ENCODE measurements at regions of chr22 and their contacts with region 1.

Region 1: DNA sequence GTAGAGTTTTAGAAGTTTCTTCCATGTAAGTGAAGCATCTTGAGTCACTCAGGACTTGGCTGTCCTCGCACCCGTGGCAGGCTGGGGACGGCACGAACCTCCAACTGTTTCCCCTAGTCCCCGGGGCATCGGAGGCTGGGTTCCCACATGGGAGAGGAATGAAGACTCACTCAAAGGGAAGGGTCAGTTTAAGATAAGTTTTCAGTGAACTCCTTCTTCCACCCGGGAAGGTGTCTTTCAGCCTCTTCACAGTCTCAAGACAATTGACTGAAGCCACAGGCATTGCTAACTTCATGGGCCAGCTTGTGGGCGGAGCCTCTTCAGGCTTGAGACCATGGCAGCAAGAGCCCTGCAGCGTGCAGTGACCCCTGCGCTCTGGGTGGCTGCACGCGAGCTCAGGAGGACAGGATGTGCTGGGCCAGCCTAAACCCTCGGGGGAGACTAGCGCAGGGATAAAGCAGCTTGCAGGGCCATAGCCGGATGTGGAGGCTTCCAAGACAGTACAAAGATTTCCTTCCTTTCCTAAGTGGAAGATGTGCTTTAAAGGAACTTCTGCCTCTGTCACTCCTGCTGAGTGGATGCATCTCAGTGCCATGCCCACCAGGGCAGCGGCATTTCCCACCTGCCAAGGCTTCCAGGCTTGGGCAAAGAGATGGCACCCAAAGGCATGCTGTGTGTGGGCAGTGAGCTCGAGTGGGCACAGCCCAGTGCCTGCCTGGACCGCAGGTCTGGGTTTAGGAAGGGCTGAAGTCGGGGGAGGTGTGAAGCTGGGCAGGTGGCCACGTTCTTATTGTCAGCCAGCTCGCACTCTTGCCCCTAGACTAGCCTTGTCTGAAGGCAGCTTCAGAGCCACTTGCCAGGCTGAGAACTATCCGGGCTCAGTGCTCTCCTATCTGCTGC is 32.9 kb downstream of the PPIL2 start:
- DNase-seq: no peak
- H3K4me3 ChIP-seq: no peak overlapping the region
- CTCF ChIP-seq: no peak

Region 2: GRCh38 chr22:21569459-21570170 is 129.1 kb before region 1 on chr22:
- CTCF ChIA-PET with region 1: no interaction called
- POLR2A ChIA-PET with region 1: no interaction called
- DNase-seq: no peak
- H3K4me3 ChIP-seq: peak overlapping the region; percentile 24
- CTCF ChIP-seq: no peak

Region 3: DNA sequence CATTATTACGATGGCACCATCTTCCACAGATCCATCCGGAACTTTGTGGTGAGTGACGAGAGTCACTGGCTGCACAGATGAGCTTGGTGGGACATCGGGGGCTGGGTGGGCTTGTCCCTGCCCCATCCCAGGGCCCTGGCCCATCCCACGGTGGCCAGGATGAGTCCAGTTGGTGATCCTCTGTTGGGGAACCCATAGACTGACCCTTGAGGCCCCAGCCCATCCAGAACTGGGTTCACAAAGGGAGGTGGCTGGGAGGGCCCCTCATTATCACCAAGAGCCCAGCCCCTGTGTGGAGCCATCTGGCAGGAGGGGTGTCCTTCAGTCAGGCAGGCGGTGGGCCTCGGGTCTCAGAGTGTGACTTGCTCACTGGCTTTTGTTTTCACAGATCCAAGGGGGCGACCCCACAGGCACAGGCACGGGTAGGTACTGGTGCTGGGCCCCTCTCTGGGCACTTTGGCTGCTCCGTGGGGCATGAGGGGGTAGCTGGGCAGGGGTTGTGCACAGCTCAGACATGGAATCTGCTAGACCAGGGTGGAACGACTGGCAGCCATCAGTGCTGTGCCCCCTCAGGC is 10.9 kb before region 1 on chr22:
- CTCF ChIA-PET with region 1: no interaction called
- POLR2A ChIA-PET with region 1: no interaction called
- DNase-seq: no peak
- H3K4me3 ChIP-seq: no peak overlapping the region
- CTCF ChIP-seq: no peak

Region 4: GRCh38 chr22:21712894-21713712 is 14.4 kb after region 1 on chr22:
- CTCF ChIA-PET with region 1: interaction called, 12 read pairs
- POLR2A ChIA-PET with region 1: no interaction called
- DNase-seq: no peak
- H3K4me3 ChIP-seq: peak overlapping the region; percentile 28
- CTCF ChIP-seq: peak; percentile 81